GM13976 (cell line): ENCODE measurements at regions of chr17 and their contacts with region 1.

Region 1: GRCh38 chr17:69597898-69598692 is 183.6 kb downstream of the MAP2K6 start:
- DNase-seq: no peak
- CTCF ChIP-seq: no peak

Region 2: GRCh38 chr17:69802039-69802740 is 204.1 kb after region 1 on chr17:
- in situ Hi-C with region 1: no loop called
- DNase-seq: no peak
- CTCF ChIP-seq: no peak

Region 3: GRCh38 chr17:70144260-70144846 is 546.3 kb after region 1 on chr17:
- in situ Hi-C with region 1: loop called (anchors 10 kb)
- DNase-seq: no peak
- CTCF ChIP-seq: no peak